Right lobe of liver (tissue), 6 donors: ENCODE measurements at regions of chr3 and their contacts with region 1.

Region 1: GRCh38 chr3:8769088-8769822 is at the start of gene OXTR:
- DNase-seq: peak in 1 of 3 donors; percentile 60
- ATAC-seq: peak; percentile 93 to 98 (median 95)
- H3K4me3 ChIP-seq: peak within 1 kb of the TSS in 1 of 3 donors; percentile 15
- H3K27ac ChIP-seq: no peak within 1 kb of the TSS
- H3K4me1 ChIP-seq: peaks cover 0 to 13% (median 0%) of the 10 kb centered on the region in 4 donors
- H3K27me3 ChIP-seq: peaks cover 0 to 3% of the 10 kb centered on the region in 2 donors
- CTCF ChIP-seq: peak; percentile 83 to 99 (median 97)
- POLR2A ChIP-seq: no peak
- total RNA-seq, gene OXTR: 0.04 to 0.31 (median 0.20) TPM

Region 2: DNA sequence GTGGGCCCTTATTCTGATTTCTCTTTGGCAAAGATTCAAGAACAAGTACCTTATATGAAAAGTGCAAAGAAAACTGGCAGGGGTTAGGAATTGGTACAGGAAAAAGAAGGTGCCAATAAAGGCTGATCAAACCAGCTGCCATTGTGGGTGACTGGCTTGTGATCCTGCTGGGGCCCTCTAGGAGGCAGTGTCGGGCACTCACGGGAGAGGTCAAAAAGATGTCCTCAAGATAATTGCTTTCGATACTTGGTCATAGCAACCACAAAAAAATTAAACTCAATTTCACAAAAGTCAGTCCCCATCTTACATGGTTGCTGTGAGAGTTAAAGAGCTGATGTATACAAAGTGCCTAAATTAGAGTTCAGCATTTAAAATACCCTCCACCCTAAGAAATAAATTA is 66.7 kb before region 1 on chr3:
- intact Hi-C with region 1: no loop called
- DNase-seq: no peak
- ATAC-seq: no peak
- H3K4me3 ChIP-seq: no peak overlapping the region
- H3K27ac ChIP-seq: no peak overlapping the region
- H3K4me1 ChIP-seq: no peaks in the 10 kb centered on the region
- H3K27me3 ChIP-seq: no peaks in the 10 kb centered on the region
- CTCF ChIP-seq: no peak
- POLR2A ChIP-seq: no peak

Region 3: GRCh38 chr3:8914491-8914890 is 145.2 kb after region 1 on chr3:
- intact Hi-C with region 1: no loop called
- DNase-seq: no peak
- ATAC-seq: no peak
- H3K4me3 ChIP-seq: no peak overlapping the region
- H3K27ac ChIP-seq: no peak overlapping the region
- H3K4me1 ChIP-seq: no peaks in the 10 kb centered on the region
- H3K27me3 ChIP-seq: no peaks in the 10 kb centered on the region
- CTCF ChIP-seq: no peak
- POLR2A ChIP-seq: no peak

Region 4: GRCh38 chr3:8954938-8955763 is 185.9 kb after region 1 on chr3:
- intact Hi-C with region 1: loop called in 1 of 2 experiments (anchors 10 kb)
- DNase-seq: no peak
- ATAC-seq: peak in 1 of 4 donors; percentile 38
- H3K4me3 ChIP-seq: no peak overlapping the region
- H3K27ac ChIP-seq: no peak overlapping the region
- H3K4me1 ChIP-seq: no peaks in the 10 kb centered on the region
- H3K27me3 ChIP-seq: no peaks in the 10 kb centered on the region
- CTCF ChIP-seq: no peak
- POLR2A ChIP-seq: no peak